ENCODE measurements at regions of chr3 and their contacts with region 1.

Region 1: GRCh38 chr3:134794950-134795745 is at the start of gene EPHB1:
- DNase-seq: peak; percentile 95
- H3K4me3 ChIP-seq: peak within 1 kb of the TSS; percentile 61 to 69 (median 64)
- H3K27ac ChIP-seq: peak within 1 kb of the TSS in 2 of 4 donors; percentile 83 to 85
- H3K4me1 ChIP-seq: peaks cover 19 to 54% (median 38%) of the 10 kb centered on the region in 4 donors
- H3K27me3 ChIP-seq: peaks cover 0 to 38% (median 4%) of the 10 kb centered on the region in 4 donors
- CTCF ChIP-seq: peak; percentile 83 to 88 (median 84)
- EP300 ChIP-seq: no peak
- POLR2A ChIP-seq: no peak
- total RNA-seq, gene EPHB1: under 0.01 to 6.1 (median 2.8) TPM

Region 2: DNA sequence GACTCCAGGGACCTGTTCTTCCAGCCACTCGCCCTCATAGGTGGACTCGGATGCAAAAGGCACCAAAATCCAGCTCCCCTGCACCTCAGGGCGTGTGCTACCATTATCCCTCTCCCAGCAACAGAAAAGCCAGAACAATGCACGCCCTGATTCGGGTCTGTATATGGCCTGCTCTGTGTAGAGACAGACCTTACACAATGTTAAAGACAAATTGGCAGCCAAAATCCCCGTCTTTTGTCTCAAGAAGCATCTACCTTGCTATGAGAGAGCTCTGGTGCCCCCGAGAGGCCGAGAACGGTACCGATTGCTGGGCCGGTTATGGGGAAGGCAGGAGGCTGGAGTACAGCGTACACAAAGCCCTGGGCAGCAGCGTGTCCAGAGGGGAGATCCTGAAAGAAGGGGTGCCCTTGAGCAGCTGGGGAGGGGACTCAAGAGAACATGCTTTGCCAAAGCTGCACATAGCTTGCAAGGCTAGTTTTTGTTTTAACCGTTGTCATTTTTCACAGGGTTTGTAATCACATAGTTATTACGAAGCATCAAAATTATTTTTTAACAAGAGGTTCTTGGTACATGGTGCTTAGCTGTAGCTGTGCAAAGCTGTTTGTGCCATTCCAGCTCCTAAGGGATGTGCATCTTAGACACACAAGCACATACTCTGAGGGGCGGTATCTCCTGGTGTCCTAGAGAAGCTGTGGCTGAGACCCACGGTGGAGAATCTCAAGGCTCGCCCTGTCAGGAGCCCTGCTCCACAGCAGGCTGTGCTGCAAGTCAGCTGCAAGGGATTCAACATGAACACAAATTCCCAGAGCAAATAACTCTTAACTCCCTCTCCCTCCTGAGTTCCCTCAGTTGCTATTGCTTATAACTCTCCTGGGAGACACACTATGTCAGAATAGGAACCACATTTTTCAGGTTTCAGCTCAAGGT is 708.9 kb after region 1 on chr3:
- intact Hi-C with region 1: loop called (anchors 5 kb)
- DNase-seq: no peak
- H3K4me3 ChIP-seq: no peak overlapping the region
- H3K27ac ChIP-seq: no peak overlapping the region
- H3K4me1 ChIP-seq: peaks cover 0 to 6% (median 4%) of the 10 kb centered on the region in 4 donors
- H3K27me3 ChIP-seq: no peaks in the 10 kb centered on the region
- CTCF ChIP-seq: peak in 2 of 3 experiments; percentile 36 to 42
- EP300 ChIP-seq: no peak
- POLR2A ChIP-seq: no peak

Region 3: GRCh38 chr3:135895106-135895733 is 1100.1 kb after region 1 on chr3:
- intact Hi-C with region 1: loop called (anchors 5 kb)
- DNase-seq: no peak
- H3K4me3 ChIP-seq: no peak overlapping the region
- H3K27ac ChIP-seq: no peak overlapping the region
- H3K4me1 ChIP-seq: no peaks in the 10 kb centered on the region
- H3K27me3 ChIP-seq: no peaks in the 10 kb centered on the region
- CTCF ChIP-seq: peak; percentile 67 to 82 (median 81)
- EP300 ChIP-seq: no peak
- POLR2A ChIP-seq: no peak

Measured in esophagus muscularis mucosa (tissue), 4 donors.